ENCODE measurements at regions of chr18 and their contacts with region 1.

Region 1: GRCh38 chr18:25814841-25815458 is 275.5 kb downstream of the SS18 start:
- DNase-seq: no peak
- H3K4me3 ChIP-seq: no peak overlapping the region
- H3K27ac ChIP-seq: no peak overlapping the region
- H3K4me1 ChIP-seq: no peaks in the 10 kb centered on the region
- H3K27me3 ChIP-seq: no peaks in the 10 kb centered on the region
- CTCF ChIP-seq: no peak
- POLR2A ChIP-seq: no peak

Region 2: GRCh38 chr18:25825979-25826776 is 11.2 kb after region 1 on chr18:
- intact Hi-C with region 1: loop called (anchors 1 kb)
- DNase-seq: no peak
- H3K4me3 ChIP-seq: no peak overlapping the region
- H3K27ac ChIP-seq: no peak overlapping the region
- H3K4me1 ChIP-seq: no peaks in the 10 kb centered on the region
- H3K27me3 ChIP-seq: no peaks in the 10 kb centered on the region
- CTCF ChIP-seq: no peak
- POLR2A ChIP-seq: no peak

Measured in breast epithelium (tissue), 4 donors.